Caco-2 (cell line): ENCODE measurements at regions of chr12 and their contacts with region 1.

Region 1: DNA sequence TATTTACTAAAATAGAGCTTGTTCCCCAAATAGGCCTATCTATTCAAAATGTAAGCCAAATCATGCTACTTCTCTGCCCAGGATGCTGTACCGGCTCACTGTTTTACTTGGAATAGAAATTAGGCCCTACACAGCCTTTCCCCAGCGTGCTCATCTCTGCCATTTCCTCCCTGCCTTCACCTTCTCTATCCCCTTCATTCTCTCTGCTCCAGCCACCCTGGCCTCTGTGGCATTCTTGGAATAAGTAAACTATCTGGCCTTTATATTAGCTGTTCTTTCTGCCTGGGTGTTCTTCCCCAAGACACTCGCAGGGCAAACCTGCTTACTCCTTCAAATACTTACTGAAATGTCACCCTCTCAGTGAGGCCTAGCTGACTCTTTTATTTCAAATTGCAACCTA is 30.9 kb upstream of the DYRK2 start:
- DNase-seq: no peak
- H3K4me3 ChIP-seq: no peak overlapping the region
- H3K4me3 Mint-ChIP-seq: no peak overlapping the region
- H3K27ac Mint-ChIP-seq: no peak overlapping the region
- H3K4me1 ChIP-seq: no peaks in the 10 kb centered on the region
- H3K4me1 Mint-ChIP-seq: no peaks in the 10 kb centered on the region
- H3K27me3 ChIP-seq: no peaks in the 10 kb centered on the region
- H3K27me3 Mint-ChIP-seq: no peaks in the 10 kb centered on the region
- CTCF ChIP-seq: no peak

Region 2: GRCh38 chr12:67592216-67593011 is 25.2 kb before region 1 on chr12:
- CTCF ChIA-PET with region 1: no interaction called
- POLR2A ChIA-PET with region 1: no interaction called
- intact Hi-C with region 1: loop called (anchors 1 kb)
- DNase-seq: no peak
- H3K4me3 ChIP-seq: no peak overlapping the region
- H3K4me3 Mint-ChIP-seq: no peak overlapping the region
- H3K27ac Mint-ChIP-seq: no peak overlapping the region
- H3K4me1 ChIP-seq: peaks cover 17% of the 10 kb centered on the region; the same call in 1 of the 2 replicates
- H3K4me1 Mint-ChIP-seq: peaks cover 19% of the 10 kb centered on the region
- H3K27me3 ChIP-seq: no peaks in the 10 kb centered on the region
- H3K27me3 Mint-ChIP-seq: peaks cover 4% of the 10 kb centered on the region
- CTCF ChIP-seq: no peak